H1 (cell line): ENCODE measurements at regions of chr9 and their contacts with region 1.

Region 1: DNA sequence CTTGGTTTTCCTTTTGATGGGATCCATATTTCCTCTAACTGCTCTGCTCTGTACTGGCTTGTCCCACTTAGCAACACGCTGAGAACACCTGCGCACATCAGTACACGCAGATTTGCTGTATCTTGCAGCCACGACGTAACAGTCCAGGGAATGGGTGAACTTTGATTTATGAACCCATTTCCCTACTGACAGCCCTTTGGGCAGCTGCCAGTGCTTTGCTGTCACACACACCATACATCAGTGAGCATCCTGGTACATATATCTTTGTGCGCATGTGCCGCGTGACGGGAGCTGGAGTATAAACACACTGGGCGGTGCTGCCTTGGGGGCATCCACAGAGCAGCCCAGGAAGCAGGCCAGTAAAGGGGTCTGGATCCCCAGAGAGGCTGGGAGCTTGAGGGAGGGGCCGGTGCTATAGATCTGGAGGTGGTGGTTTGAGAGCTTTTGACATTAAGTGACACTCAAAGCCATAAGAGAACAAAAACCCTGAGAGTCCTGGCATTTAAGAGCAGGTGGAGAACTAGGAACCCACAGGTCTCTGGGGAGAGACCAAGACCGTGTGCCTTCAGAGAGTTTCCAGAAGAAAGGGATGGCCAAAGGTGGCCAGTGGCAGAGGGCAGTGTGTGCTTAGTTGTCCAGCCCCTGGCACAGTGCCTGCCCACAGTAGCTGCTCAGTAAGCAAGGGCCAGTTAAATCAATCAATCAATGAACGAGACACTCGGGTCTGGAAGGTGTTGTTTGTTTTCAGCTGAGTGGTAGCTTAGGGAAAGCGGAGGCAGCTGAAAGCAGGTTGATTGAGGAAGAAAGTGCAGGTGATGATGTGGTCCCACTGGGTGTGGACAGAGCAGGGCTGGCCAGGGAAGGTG is 53.7 kb downstream of the LMX1B start:
- DNase-seq: no peak
- H3K4me3 ChIP-seq: no peak overlapping the region
- H3K27ac ChIP-seq: no peak overlapping the region
- H3K4me1 ChIP-seq: peaks cover 14 to 57% (median 42%) of the 10 kb centered on the region in 4 experiments
- H3K27me3 ChIP-seq: peaks cover 0 to 6% (median 2%) of the 10 kb centered on the region in 4 experiments; a peak in 4 of 7 replicates
- CTCF ChIP-seq: no peak
- EP300 ChIP-seq: no peak
- POLR2A ChIP-seq: no peak
- RAD21 ChIP-seq: no peak

Region 2: DNA sequence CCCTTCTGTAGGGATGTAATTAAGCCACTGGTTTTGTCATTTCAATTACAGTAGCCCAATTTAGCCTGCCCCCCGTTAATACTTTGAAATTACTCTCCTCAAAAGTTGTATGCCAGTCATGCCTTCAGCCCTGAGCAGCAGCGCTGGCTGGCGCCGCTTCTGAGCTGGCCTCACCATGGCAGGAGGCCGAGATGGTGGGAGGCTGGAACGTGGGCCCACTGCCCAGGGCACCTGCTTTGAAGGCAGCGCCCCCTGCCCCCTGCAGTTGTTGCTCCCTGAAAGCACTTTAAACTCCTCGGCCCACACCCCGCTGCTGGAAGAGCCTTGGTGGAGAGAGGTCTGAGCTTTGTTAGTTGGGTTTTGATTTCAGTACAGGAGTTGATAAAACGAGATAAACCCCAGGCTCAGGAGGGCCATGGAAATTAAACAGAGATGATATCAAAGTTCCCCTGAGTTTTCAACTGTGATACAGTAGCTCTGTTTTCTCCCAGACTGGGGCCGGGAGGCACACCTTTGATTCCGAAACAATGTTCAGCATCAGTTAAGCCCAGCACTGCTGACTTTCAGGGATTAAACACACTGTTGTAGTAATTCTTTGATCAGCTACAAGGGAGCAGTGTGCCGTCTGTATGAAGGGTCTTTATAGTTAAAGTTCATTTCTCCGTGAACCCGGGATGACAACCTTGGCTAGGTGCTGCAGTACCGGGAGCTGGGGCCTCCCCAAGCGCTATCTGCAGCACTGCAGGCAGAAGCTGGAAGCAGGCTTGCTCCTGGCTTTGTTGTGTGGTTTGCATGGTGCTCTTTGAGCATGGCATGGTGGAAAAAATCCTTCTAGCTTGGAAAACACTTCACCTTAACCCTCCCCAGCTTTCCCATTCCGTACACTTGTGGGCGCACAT is 331.3 kb before region 1 on chr9:
- CTCF ChIA-PET with region 1: no interaction called
- POLR2A ChIA-PET with region 1: no interaction called
- DNase-seq: no peak
- H3K4me3 ChIP-seq: no peak overlapping the region
- H3K27ac ChIP-seq: no peak overlapping the region
- H3K4me1 ChIP-seq: peaks cover 0 to 6% (median 2%) of the 10 kb centered on the region in 4 experiments; a peak in 2 of 7 replicates
- H3K27me3 ChIP-seq: no peaks in the 10 kb centered on the region
- CTCF ChIP-seq: peak in 2 of 3 experiments; percentile 1 to 19; a peak in 2 of 4 replicates
- EP300 ChIP-seq: no peak
- POLR2A ChIP-seq: no peak
- RAD21 ChIP-seq: no peak

Region 3: GRCh38 chr9:126682928-126683697 is 15.7 kb after region 1 on chr9:
- CTCF ChIA-PET with region 1: interaction called, 67 read pairs
- POLR2A ChIA-PET with region 1: interaction called, 26 read pairs
- DNase-seq: no peak
- H3K4me3 ChIP-seq: peak overlapping the region in 2 of 4 experiments; percentile 10 to 49; a peak in 3 of 8 replicates
- H3K27ac ChIP-seq: no peak overlapping the region
- H3K4me1 ChIP-seq: peaks cover 0 to 19% (median 6%) of the 10 kb centered on the region in 4 experiments; a peak in 6 of 7 replicates
- H3K27me3 ChIP-seq: peaks cover 14 to 64% (median 51%) of the 10 kb centered on the region in 4 experiments
- CTCF ChIP-seq: no peak
- EP300 ChIP-seq: no peak
- POLR2A ChIP-seq: no peak
- RAD21 ChIP-seq: no peak